ENCODE measurements at regions of chr3 and their contacts with region 1.

Region 1: GRCh38 chr3:120420928-120421551 is 29.8 kb downstream of the FSTL1 start:
- DNase-seq: peak; percentile 70
- H3K4me3 ChIP-seq: no peak overlapping the region
- CTCF ChIP-seq: peak; percentile 7

Region 2: DNA sequence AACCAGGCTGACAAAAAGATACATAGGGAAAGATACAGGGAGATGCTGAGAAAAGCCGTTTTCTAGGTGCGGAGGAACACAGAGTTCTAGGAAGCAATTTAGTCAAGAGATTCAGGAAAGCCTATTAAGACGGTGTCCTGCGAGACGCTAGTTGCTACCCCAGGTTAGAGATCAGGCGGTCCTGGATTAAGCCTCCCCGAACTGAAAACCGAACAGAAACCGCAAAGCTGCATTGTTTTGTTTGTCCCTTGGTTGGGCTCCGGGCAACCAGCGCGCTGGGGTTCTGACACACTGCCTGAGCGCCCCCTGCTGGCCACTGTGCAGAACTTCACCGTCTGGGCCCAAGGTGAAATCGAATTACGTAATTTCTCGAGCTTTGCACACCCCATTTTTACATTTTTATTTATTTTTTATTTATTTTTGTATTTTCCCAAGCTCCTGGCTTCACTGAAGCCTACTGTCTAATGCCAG is 137.8 kb after region 1 on chr3:
- in situ Hi-C with region 1: loop called (anchors 10 kb)
- DNase-seq: peak; percentile 92
- H3K4me3 ChIP-seq: peak overlapping the region; percentile 57
- CTCF ChIP-seq: peak; percentile 90

Measured in astrocyte of the spinal cord (primary cell).